BJ (cell line): ENCODE measurements at regions of chr14 and their contacts with region 1.

Region 1: GRCh38 chr14:101961011-101961721 is 3.2 kb upstream of the DYNC1H1 start:
- DNase-seq: no peak
- H3K4me3 ChIP-seq: no peak overlapping the region
- H3K27me3 ChIP-seq: no peaks in the 10 kb centered on the region
- CTCF ChIP-seq: peak; percentile 96

Region 2: DNA sequence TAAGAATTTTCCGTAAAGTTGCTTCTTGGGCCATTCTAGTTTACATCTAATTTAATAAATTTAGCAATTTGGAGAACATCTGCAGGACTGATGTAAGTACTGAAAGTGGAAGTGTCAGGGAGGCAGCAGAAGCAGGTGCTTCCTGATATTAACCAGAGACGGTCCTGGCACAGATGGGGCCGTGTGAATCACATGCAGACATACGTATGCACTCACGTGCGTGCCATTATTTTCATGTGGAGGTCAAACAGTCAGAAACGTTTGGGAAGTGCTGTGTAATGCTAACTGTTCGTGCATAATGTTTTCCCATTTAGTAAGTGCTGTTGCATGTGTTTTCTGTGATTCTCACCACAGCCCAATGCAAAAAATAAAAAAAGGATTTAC is 84.6 kb before region 1 on chr14:
- CTCF ChIA-PET with region 1: no interaction called
- POLR2A ChIA-PET with region 1: no interaction called
- DNase-seq: peak; percentile 48
- H3K4me3 ChIP-seq: no peak overlapping the region
- H3K27me3 ChIP-seq: no peaks in the 10 kb centered on the region
- CTCF ChIP-seq: no peak

Region 3: DNA sequence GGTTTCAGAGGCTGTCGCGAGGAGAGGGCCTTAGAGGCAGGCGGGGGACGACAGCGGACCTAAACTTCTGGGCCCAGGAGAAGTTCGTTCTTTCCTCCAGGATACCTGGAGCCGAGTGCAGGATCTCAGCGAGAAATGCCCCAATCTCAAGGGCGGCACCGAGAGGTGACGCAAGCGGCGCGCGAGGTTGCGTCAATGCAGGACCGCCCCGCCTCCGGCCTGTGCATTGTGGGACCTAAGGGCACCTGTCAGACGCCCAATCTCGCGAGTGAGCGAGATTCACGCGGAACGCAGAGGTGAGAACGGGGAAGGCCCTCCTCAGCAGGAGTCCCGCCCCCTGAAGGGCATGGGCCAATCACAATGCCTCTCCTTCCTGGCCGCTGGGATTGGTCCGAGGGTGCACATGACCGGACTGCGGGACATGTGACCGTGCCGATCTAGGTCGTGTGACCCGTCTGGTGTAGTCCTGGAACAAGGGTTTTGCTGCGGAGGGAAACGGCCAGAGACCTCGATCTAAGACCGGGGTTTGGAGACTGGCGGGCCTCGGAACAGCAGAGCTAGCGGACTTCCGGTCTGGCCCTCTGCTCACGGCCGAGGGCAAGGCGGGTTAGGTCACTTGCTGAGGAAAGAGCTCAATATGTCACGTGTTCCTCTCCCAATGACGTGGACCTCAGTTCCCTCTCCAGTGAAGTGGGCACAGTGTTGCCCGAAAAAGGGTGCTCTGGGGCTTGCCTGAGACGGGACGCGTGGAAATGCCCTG is 13.1 kb before region 1 on chr14:
- CTCF ChIA-PET with region 1: interaction called, 10 read pairs
- POLR2A ChIA-PET with region 1: interaction called, 11 read pairs
- DNase-seq: peak; percentile 99
- H3K4me3 ChIP-seq: peak overlapping the region; percentile 87
- H3K27me3 ChIP-seq: 0 out of 2 replicates have a peak, but pooled peaks cover 3% of the 10 kb centered on the region
- CTCF ChIP-seq: no peak